PC-9 (cell line): ENCODE measurements at regions of chr4 and their contacts with region 1.

Region 1: DNA sequence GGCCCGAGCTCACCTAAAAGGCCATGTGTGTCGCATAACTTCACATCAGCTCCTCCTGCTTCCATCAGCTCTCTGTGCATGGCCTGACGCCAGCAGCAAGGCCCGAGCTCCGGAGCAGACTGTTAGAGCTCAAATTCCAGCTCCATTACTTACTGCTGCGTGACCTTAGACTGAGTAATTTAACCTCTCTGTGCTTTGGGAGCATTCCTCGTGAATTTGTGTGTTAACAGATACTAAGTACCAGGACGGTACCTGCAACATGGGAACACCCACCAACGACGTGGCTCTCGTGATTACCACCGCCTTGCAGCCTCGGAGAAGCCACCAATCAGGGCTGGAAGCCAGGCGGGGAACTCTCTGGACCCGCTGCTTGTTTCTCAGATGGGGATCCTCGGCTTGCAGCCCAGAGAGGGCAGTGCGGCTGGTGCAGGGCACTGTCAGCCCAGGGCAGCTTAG is 12.9 kb downstream of the LETM1 start:
- DNase-seq: no peak
- H3K4me3 ChIP-seq: no peak overlapping the region
- H3K27ac ChIP-seq: no peak overlapping the region
- H3K4me1 ChIP-seq: no peaks in the 10 kb centered on the region
- H3K27me3 ChIP-seq: no peaks in the 10 kb centered on the region
- CTCF ChIP-seq: no peak

Region 2: GRCh38 chr4:2194496-2194895 is 351.5 kb after region 1 on chr4:
- CTCF ChIA-PET with region 1: no interaction called
- POLR2A ChIA-PET with region 1: interaction called, 10 read pairs
- intact Hi-C with region 1: no loop called
- DNase-seq: no peak
- H3K4me3 ChIP-seq: no peak overlapping the region
- H3K27ac ChIP-seq: no peak overlapping the region
- H3K4me1 ChIP-seq: no peaks in the 10 kb centered on the region
- H3K27me3 ChIP-seq: 0 out of 2 replicates have a peak, but pooled peaks cover 3% of the 10 kb centered on the region
- CTCF ChIP-seq: no peak